ENCODE measurements at regions of chr14 and their contacts with region 1.

Region 1: GRCh38 chr14:73886449-73887317 is at the start of gene ZNF410:
- DNase-seq: peak; percentile 84 to 90 (median 86)
- H3K4me3 ChIP-seq: peak within 1 kb of the TSS; percentile 89
- H3K4me3 Mint-ChIP-seq: peak within 1 kb of the TSS; percentile 89 to 99 (median 98)
- H3K27ac ChIP-seq: peak within 1 kb of the TSS; percentile 96
- H3K27ac Mint-ChIP-seq: peak within 1 kb of the TSS; percentile 85 to 100 (median 99)
- H3K4me1 ChIP-seq: peaks cover 43% of the 10 kb centered on the region
- H3K4me1 Mint-ChIP-seq: peaks cover 34 to 55% (median 42%) of the 10 kb centered on the region in 4 donors
- H3K27me3 ChIP-seq: no peaks in the 10 kb centered on the region
- H3K27me3 Mint-ChIP-seq: no peaks in the 10 kb centered on the region
- total RNA-seq, gene ZNF410: 46.2 to 47.3 TPM

Region 2: DNA sequence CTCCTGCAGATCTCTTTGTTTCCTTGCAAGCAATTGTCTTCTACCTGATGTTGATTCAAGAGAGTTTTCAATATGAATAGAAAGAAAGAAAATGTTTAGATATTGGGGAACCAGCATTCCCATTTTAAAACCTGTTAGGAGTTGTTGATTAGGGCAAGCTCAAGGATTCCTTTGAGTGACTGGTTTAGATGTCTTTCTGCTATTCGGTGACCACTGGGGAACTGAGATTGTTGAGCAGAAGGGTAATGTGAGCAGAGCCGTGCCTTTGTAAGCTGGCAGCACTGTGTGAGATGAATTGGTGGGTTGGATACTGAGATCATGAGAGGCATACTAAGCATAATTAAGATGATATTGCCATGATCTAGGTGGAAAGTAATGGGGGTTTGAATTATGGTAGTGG is 688.4 kb before region 1 on chr14:
- CTCF ChIA-PET with region 1: no interaction called
- POLR2A ChIA-PET with region 1: no interaction called
- intact Hi-C with region 1: no loop called
- DNase-seq: no peak
- H3K4me3 ChIP-seq: no peak overlapping the region
- H3K4me3 Mint-ChIP-seq: no peak overlapping the region
- H3K27ac ChIP-seq: no peak overlapping the region
- H3K27ac Mint-ChIP-seq: peak overlapping the region in 2 of 7 donors; percentile 23 to 25
- H3K4me1 ChIP-seq: no peaks in the 10 kb centered on the region
- H3K4me1 Mint-ChIP-seq: peaks cover 0 to 5% (median 0%) of the 10 kb centered on the region in 4 donors
- H3K27me3 ChIP-seq: no peaks in the 10 kb centered on the region
- H3K27me3 Mint-ChIP-seq: no peaks in the 10 kb centered on the region

Region 3: DNA sequence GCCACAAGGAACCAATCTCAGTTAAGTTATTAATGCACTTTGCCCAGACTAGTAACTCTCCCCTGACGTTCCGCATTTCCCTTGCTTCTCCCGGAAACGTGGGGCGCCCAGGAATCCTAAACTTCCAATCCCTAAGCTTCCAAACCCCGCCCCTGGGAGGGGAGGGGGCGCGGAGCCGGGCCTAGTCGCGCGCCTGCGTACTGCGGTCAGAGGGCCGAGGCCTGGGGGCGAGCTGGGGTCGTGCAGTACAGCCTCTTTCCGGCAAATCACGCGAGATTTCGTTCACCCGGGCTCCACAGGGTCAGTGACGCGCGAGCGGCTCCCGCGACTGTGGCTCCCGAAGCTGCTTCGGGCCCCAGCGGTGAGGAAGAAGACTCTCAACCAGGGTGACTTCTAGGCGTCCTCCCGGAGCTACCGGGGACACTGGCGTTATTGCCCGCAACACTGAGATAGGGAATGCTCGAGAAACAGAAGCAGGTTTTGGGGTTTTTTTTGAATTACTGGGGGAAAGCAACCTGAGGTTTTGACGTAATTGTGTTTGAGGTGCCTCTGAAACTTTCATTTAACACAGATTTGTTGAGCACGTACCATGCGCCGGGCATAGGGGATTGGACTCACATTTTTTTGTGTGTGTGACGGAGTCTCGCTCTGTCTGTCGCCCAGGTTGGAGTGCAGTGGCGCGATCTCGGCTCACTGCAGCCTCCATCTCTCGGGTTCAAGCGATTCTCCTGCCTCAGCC is 34.9 kb before region 1 on chr14 and contains the start of gene PTGR2:
- CTCF ChIA-PET with region 1: interaction called, 8 read pairs
- POLR2A ChIA-PET with region 1: interaction called, 30 read pairs
- intact Hi-C with region 1: loop called (anchors 1 kb)
- DNase-seq: peak; percentile 88 to 93 (median 91)
- H3K4me3 ChIP-seq: peak within 1 kb of the TSS; percentile 42 to 91
- H3K4me3 Mint-ChIP-seq: peak within 1 kb of the TSS; percentile 92 to 99 (median 94)
- H3K27ac ChIP-seq: peak within 1 kb of the TSS; percentile 66
- H3K27ac Mint-ChIP-seq: peak within 1 kb of the TSS; percentile 93 to 99 (median 98)
- H3K4me1 ChIP-seq: peaks cover 17% of the 10 kb centered on the region
- H3K4me1 Mint-ChIP-seq: peaks cover 9 to 24% (median 17%) of the 10 kb centered on the region in 4 donors
- H3K27me3 ChIP-seq: no peaks in the 10 kb centered on the region
- H3K27me3 Mint-ChIP-seq: no peaks in the 10 kb centered on the region
- total RNA-seq, gene PTGR2: 4.5 to 5.0 TPM

Measured in CD4-positive, alpha-beta memory T cell (primary cell).